Activated CD4-positive, alpha-beta memory T cell treated with anti-CD3 and anti-CD28 coated beads, Interleukin-2, amount 10 ng/mL, durations not matched to agents 7 days and 5 days (primary cell): ENCODE measurements at regions of chr1 and their contacts with region 1.

Region 1: DNA sequence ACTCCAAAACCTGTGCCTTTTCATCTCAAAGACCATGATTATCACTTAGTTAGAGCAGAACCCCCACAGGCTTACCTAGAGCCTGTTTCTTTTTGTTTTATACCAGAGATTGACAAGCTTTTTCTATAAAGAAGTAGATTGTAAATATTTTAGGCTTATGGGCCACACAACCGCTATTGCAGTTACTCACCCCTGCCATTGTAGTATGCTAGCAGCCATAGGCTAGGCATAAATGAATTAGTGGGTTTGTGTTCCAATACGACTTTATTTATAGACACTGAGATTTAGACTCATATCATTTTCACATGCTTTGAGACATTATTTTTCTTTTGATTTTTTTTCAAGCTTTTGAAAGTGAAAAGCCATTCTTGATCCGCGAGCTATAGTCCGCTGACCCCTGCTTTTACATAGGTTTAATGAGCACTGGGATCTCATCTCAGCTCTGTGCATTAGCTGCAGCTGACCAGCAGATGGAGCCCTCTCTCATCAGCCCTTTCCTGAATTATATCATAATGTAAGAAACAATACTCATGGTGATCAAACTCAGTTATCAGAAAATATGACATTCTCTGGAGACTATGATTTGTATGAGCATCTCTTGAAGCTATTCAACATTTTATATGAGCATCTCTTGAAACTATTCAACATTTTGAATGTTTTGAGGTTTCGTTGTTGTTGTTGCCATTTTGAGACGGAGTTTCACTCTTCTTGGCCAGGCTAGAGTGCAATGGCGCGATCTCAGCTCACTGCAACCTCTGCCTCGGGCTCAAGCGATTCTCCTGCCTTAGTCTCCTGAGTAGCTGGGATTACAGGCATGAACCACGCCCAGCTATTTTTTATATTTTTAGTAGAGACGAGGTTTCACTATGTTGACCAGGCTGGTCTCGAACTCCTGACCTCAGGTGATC is 111.9 kb upstream of the L1TD1 start:
- DNase-seq: peak; percentile 38
- H3K4me3 Mint-ChIP-seq: no peak overlapping the region
- H3K27ac Mint-ChIP-seq: no peak overlapping the region
- H3K4me1 Mint-ChIP-seq: no peaks in the 10 kb centered on the region
- H3K27me3 Mint-ChIP-seq: no peaks in the 10 kb centered on the region

Region 2: DNA sequence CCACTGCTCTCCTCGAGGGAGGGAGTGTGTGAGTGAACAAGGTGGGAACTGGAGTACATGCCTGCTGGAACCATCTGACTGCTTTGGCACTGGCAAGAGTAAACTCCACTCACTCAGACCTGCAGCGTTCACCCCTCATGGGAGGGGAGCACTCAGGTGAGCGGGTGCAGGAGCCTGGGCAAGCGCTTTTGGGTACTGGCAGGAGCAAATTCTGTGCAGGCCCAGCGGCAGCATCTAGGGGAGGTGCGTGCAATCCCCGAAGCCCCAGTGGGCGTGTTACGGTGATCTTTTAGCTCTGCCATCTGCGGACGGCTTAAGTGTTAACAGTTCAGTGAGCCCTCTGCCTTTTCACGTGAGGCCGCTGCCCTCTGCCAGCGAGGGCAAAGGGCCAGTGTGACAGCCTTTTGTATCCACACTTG is 213.0 kb before region 1 on chr1:
- CTCF ChIA-PET with region 1: no interaction called
- POLR2A ChIA-PET with region 1: no interaction called
- DNase-seq: no peak
- H3K4me3 Mint-ChIP-seq: no peak overlapping the region
- H3K27ac Mint-ChIP-seq: no peak overlapping the region
- H3K4me1 Mint-ChIP-seq: peaks cover 4% of the 10 kb centered on the region
- H3K27me3 Mint-ChIP-seq: no peaks in the 10 kb centered on the region

Region 3: GRCh38 chr1:62093261-62093660 is 10.6 kb after region 1 on chr1:
- CTCF ChIA-PET with region 1: interaction called, 18 read pairs
- POLR2A ChIA-PET with region 1: no interaction called
- DNase-seq: no peak
- H3K4me3 Mint-ChIP-seq: no peak overlapping the region
- H3K27ac Mint-ChIP-seq: no peak overlapping the region
- H3K4me1 Mint-ChIP-seq: no peaks in the 10 kb centered on the region
- H3K27me3 Mint-ChIP-seq: no peaks in the 10 kb centered on the region

Region 4: GRCh38 chr1:62103880-62104279 is 21.2 kb after region 1 on chr1:
- CTCF ChIA-PET with region 1: interaction called, 13 read pairs
- POLR2A ChIA-PET with region 1: no interaction called
- DNase-seq: no peak
- H3K4me3 Mint-ChIP-seq: no peak overlapping the region
- H3K27ac Mint-ChIP-seq: no peak overlapping the region
- H3K4me1 Mint-ChIP-seq: no peaks in the 10 kb centered on the region
- H3K27me3 Mint-ChIP-seq: no peaks in the 10 kb centered on the region

Region 5: GRCh38 chr1:62131093-62131725 is 48.5 kb after region 1 on chr1:
- CTCF ChIA-PET with region 1: interaction called, 26 read pairs
- POLR2A ChIA-PET with region 1: no interaction called
- DNase-seq: peak; percentile 43
- H3K4me3 Mint-ChIP-seq: no peak overlapping the region
- H3K27ac Mint-ChIP-seq: no peak overlapping the region
- H3K4me1 Mint-ChIP-seq: no peaks in the 10 kb centered on the region
- H3K27me3 Mint-ChIP-seq: no peaks in the 10 kb centered on the region

Region 6: GRCh38 chr1:62144238-62144831 is 61.6 kb after region 1 on chr1:
- CTCF ChIA-PET with region 1: interaction called, 30 read pairs
- POLR2A ChIA-PET with region 1: no interaction called
- DNase-seq: peak; percentile 38
- H3K4me3 Mint-ChIP-seq: no peak overlapping the region
- H3K27ac Mint-ChIP-seq: no peak overlapping the region
- H3K4me1 Mint-ChIP-seq: no peaks in the 10 kb centered on the region
- H3K27me3 Mint-ChIP-seq: no peaks in the 10 kb centered on the region

Region 7: GRCh38 chr1:62417361-62417999 is 334.8 kb after region 1 on chr1:
- CTCF ChIA-PET with region 1: no interaction called
- POLR2A ChIA-PET with region 1: no interaction called
- DNase-seq: no peak
- H3K4me3 Mint-ChIP-seq: no peak overlapping the region
- H3K27ac Mint-ChIP-seq: no peak overlapping the region
- H3K4me1 Mint-ChIP-seq: no peaks in the 10 kb centered on the region
- H3K27me3 Mint-ChIP-seq: peaks cover 7% of the 10 kb centered on the region